Left cardiac atrium (tissue), 4 donors: ENCODE measurements at regions of chr11 and their contacts with region 1.

Region 1: DNA sequence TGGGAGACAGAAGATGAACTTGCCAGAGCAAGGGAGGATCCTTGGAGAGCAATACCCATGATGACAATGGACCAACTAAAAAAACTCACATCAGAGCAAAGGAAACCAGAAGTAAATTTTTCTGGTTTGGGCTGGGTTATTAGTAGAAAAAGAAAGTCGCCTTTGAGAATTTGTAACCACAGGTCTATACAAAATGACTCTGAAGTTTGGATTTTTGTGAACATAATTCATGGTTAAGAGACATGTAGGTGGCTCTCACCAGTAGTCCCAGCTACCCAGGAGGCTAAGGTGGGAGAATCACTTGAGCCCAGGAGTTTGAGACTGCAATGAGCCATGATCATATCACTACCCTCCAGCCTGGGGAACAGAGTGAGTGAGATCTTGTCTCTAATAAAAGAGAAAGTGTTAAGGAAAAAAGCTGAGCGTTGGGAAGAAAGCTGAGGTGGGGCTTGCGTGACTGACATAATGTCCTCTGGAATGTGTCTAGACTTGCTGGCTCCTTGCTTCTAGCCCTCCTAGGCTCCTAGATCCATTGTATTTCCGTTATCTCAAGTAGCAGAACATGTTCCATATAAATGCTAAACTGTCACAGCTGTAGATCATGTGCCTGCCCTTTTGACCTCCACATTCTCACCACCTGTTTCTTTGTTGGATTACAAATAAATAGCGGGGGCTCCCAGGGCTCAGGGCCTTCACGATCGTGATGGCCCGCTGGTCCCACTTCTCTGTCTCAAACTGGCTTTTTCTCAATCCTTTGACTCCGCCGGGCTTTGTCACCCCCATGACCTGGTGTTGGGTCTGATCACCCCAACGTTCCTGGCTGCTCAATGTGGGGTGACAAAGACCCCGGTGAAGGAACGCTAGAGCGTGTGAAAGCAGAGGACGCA is 56.2 kb upstream of the SC5D start:
- DNase-seq: no peak
- ATAC-seq: peak in 1 of 2 donors; percentile 39

Region 2: GRCh38 chr11:121257992-121258391 is 21.6 kb after region 1 on chr11:
- intact Hi-C with region 1: loop called in 1 of 2 experiments (anchors 1 kb)
- DNase-seq: no peak
- ATAC-seq: no peak